ENCODE measurements at regions of chr21 and their contacts with region 1.

Region 1: DNA sequence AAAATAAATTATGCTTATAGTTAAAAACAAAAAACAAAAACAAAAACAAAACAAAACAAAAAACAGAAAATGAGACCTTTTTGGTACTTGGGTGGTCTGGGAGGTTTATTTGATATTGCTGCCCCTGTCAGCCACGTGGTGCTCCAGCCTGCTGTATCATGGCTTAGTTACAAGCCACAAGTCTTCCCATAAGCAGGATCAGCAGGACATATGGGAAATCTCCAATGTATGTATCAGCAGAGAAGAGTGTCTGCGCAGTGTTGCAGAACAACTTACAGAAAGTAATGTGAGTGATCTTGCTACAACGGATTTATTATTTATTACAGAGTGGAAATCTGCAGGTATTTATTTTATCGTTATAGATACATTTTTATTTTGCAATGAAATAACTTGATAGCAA is 423.0 kb upstream of the TMPRSS15 start:
- DNase-seq: no peak
- ATAC-seq: no peak

Region 2: DNA sequence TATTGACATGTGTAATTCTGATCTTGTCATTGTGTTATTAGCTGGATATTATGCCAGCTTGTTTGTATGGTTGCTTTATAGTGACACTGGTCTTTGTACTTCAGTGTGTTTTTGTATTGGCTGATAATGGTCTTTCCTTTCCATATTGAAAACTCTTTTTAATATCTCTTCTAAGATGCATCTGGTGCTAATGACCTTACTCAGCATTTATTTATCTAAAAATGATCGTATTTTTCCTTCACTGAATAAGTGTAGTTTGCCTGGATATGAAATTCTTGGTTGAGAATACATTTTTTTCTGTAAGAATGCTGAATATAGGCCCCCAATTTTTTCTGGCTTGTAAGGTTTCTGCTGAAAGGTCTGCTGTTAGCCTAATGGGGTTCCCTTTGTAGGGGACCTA is 42.5 kb after region 1 on chr21:
- intact Hi-C with region 1: loop called (anchors 5 kb)
- DNase-seq: no peak
- ATAC-seq: no peak

Measured in Right ventricle myocardium inferior (tissue), 1 donor.